ENCODE measurements at regions of chr15 and their contacts with region 1.

Region 1: GRCh38 chr15:58227706-58228543 is 89.7 kb downstream of the AQP9 start:
- DNase-seq: peak; percentile 79
- H3K4me3 ChIP-seq: no peak overlapping the region
- H3K27ac ChIP-seq: no peak overlapping the region
- H3K4me1 ChIP-seq: peaks cover 2% of the 10 kb centered on the region
- H3K27me3 ChIP-seq: peaks cover 13 to 18% of the 10 kb centered on the region in 2 experiments
- CTCF ChIP-seq: peak; percentile 69 to 76
- POLR2A ChIP-seq: no peak

Region 2: DNA sequence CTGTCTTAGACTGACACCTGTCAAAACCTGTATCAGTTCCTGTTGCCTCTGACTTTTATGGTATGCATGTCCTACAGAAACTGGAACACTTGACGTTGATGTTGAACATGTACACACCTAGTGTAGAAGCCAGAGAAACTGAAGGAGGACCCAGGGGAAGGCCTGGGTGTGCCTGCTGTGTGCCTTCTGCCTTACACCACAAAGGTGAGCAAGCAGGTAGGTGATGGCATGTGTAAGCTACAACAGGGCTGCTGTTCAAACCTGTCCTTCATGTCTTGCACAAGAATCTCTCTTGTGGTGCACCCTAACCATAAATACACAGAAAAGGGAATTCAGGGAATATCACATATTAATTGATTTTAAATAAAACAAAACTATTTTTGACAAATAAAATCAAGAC is 103.3 kb before region 1 on chr15:
- CTCF ChIA-PET with region 1: no interaction called
- POLR2A ChIA-PET with region 1: no interaction called
- dilution Hi-C with region 1: no loop called
- intact Hi-C with region 1: no loop called
- DNase-seq: no peak
- H3K4me3 ChIP-seq: no peak overlapping the region
- H3K27ac ChIP-seq: no peak overlapping the region
- H3K4me1 ChIP-seq: no peaks in the 10 kb centered on the region
- H3K27me3 ChIP-seq: no peaks in the 10 kb centered on the region
- CTCF ChIP-seq: no peak
- POLR2A ChIP-seq: no peak

Region 3: GRCh38 chr15:58212909-58213526 is 14.9 kb before region 1 on chr15:
- CTCF ChIA-PET with region 1: interaction called, 44 read pairs
- POLR2A ChIA-PET with region 1: no interaction called
- dilution Hi-C with region 1: no loop called
- intact Hi-C with region 1: no loop called
- DNase-seq: peak; percentile 56
- H3K4me3 ChIP-seq: no peak overlapping the region
- H3K27ac ChIP-seq: no peak overlapping the region
- H3K4me1 ChIP-seq: peaks cover 5% of the 10 kb centered on the region
- H3K27me3 ChIP-seq: no peaks in the 10 kb centered on the region
- CTCF ChIP-seq: peak; percentile 35 to 59
- POLR2A ChIP-seq: no peak

Region 4: DNA sequence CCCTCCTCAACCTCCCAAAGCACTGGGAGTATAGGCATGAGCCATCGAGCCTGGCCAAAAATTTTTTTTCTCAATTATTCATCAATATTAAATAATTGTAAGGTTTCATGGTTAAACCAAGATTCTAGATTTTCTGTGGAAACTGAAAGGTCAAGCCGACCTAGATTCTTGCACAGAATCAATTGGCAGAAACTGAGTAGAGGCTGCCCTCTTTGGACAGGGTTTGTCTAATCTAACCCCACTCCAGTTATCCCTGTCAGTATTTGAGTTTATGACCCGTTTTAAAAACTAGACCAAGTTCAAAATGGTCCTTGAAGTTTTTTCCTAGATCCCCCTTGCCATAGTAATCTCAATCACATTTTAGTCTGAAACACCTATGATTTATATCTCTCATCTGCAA is 530.2 kb after region 1 on chr15:
- CTCF ChIA-PET with region 1: interaction called, 21 read pairs
- POLR2A ChIA-PET with region 1: no interaction called
- dilution Hi-C with region 1: no loop called
- intact Hi-C with region 1: loop called (anchors 2 kb)
- DNase-seq: no peak
- H3K4me3 ChIP-seq: no peak overlapping the region
- H3K27ac ChIP-seq: no peak overlapping the region
- H3K4me1 ChIP-seq: no peaks in the 10 kb centered on the region
- H3K27me3 ChIP-seq: no peaks in the 10 kb centered on the region
- CTCF ChIP-seq: no peak
- POLR2A ChIP-seq: no peak

Region 5: DNA sequence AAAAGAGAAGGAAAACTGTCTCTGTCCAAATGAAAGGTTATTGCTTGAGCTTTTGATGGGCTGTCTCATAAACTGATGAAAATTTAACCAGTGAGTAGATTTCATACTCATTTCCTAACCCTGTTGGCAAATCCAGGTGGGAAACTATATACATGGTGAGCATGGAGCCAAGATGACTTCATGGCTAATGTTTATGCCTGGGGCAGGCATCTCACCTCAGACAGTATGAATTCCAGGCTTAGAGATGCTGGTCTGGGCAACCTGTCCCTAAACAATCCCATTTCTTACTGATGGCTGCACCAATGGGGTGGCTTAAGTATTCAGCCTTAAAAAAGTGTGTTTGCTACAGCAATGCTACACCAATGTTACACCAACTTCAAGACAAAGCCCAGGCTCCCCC is 647.4 kb after region 1 on chr15:
- CTCF ChIA-PET with region 1: interaction called, 6 read pairs
- POLR2A ChIA-PET with region 1: no interaction called
- dilution Hi-C with region 1: no loop called
- intact Hi-C with region 1: loop called (anchors 5 kb)
- DNase-seq: no peak
- H3K4me3 ChIP-seq: no peak overlapping the region
- H3K27ac ChIP-seq: no peak overlapping the region
- H3K4me1 ChIP-seq: no peaks in the 10 kb centered on the region
- H3K27me3 ChIP-seq: no peaks in the 10 kb centered on the region
- CTCF ChIP-seq: no peak
- POLR2A ChIP-seq: no peak

Region 6: DNA sequence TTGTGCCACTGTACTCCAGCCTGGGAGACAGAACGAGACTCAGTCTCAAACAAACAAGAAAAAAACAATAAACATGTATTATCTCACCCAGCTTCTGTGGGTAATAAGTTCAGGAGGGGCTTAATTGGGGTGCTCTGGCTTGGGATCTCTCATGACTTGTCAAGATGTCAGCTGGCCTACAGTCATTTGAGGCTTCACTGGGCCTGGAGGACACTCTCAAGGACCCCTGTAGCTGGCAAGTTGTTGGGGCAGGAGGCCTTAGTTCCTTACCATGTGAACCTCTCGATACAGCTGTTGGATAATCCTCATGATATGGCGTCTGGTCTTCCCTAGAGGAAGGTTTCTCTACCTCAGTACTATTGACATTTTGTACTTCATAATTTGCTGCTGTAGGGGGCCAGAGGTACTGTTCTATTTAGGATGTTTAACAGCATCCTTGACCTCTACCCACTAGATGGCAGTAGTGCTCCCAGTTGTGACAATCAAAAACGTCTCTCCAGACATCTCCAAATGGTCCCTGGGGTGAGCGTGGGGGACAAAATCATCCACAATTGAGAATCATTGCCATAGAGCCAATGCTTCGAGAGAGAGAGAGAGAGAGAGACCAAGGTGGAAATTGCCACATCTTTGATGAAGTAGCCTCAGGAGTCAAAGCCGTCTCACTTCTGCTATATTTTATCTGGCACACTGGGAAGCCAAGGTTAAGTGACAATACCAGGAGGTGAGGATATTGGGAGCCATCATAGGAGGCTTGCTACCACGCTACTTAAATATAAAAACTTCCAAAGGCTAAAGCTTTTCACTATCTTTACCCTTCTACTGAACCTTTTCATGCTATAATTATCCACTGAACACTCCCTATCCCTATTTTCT is 729.4 kb after region 1 on chr15:
- CTCF ChIA-PET with region 1: interaction called, 10 read pairs
- POLR2A ChIA-PET with region 1: no interaction called
- dilution Hi-C with region 1: no loop called
- intact Hi-C with region 1: loop called (anchors 1 kb)
- DNase-seq: peak; percentile 65
- H3K4me3 ChIP-seq: no peak overlapping the region
- H3K27ac ChIP-seq: no peak overlapping the region
- H3K4me1 ChIP-seq: peaks cover 5% of the 10 kb centered on the region
- H3K27me3 ChIP-seq: no peaks in the 10 kb centered on the region
- CTCF ChIP-seq: peak; percentile 76 to 83
- POLR2A ChIP-seq: no peak

Region 7: DNA sequence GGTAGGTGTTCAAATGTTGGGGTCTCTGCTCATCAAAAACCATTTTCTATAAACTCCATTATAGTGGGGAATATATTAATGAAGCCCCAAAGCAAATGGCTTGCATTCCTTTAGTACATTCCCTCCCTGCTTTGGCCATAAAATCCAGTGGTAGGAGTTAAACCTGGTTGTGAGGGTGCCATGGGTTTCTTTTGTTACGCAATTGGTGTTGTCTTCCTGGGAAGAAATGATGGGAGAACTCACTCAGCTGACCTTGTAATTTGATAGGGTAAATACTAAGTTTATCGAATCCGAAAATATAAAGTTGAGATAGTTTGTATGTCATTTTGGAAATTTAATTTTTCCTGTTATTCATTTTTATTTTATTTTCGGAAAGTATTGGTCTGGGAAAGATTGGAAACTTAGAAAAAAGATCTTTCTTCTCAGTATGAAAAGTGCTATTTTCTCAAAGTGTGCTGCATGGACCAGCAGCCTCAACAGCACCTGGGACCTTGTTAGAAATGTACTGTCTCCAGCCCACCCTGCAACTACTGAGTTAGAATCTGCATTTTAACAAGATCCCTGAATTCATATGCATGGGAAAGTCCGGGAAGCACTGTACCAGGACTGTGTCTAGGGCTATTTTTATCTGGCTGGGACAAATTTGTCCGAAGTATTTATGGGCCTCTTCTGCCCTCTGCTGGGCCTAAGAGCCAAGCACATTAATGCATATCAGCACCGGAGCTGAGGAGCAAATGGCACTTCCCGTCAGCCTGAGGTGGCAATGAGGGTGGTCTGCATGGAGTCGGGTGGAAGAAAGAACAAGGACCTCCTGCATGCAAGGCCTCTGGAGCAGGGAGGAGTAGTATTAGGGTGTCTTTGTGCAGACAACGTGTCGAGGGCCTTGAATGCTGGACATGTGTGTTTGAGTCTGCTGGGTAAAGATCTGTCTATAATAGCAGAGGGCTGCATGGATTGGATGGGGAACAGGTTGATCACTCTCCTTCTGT is 1264.8 kb after region 1 on chr15:
- CTCF ChIA-PET with region 1: interaction called, 15 read pairs
- POLR2A ChIA-PET with region 1: no interaction called
- dilution Hi-C with region 1: no loop called
- intact Hi-C with region 1: loop called (anchors 5 kb)
- DNase-seq: peak; percentile 73
- H3K4me3 ChIP-seq: no peak overlapping the region
- H3K27ac ChIP-seq: no peak overlapping the region
- H3K4me1 ChIP-seq: no peaks in the 10 kb centered on the region
- H3K27me3 ChIP-seq: no peaks in the 10 kb centered on the region
- CTCF ChIP-seq: peak; percentile 68 to 86
- POLR2A ChIP-seq: no peak